Activated T-helper 2 cell treated with anti-CD3 and anti-CD28 coated beads, Interferon-gamma antibody, Interleukin-2, Interleukin-4, amounts not matched to agents 10 μg/mL and 5 μg/mL and 100 μg/mL, durations not matched to agents 14 hours and 24 hours and 36 hours (primary cell): ENCODE measurements at regions of chr4 and their contacts with region 1.

Region 1: DNA sequence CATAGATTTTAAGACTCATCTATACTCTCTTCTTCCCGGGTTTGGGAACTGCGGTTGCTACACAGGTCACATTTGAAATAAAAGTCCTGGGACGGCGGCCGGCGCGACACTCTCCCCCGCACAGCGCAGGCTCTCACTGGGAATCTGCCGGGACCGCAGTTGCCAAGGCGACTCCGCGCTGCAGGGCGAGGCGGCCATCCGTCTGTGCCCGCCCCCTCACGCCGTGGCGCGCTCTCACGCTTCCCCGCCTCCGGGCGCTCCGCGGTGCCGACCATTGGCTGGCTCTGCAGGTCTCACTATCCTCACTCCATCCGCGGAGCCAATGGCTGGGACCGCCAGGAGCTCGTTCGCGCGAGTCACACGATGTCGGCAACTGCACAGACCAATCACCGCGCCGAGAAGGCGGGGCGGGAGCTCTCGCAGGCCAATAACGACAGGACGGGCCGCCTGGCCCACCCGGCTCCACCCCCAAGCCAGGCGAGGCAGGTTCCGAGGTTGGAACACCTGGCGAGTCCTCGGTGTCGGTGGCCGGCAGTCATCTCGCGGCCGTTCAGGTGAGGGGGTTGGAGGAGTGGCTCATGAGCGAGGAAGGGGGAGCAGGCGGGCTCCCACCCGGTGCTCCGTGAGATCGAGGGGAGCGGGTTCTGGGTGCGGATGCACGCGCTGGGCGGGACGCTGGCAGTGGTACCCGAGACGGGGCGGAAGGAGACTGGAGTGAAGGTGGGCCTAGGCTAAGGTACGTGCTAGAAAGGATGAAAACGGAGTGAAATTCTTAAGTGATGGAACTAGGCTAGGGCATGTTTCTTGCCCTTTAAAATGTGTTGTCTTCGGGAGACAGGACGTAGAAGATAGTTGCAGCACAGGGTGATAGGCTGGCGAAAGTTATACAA is at the start of gene MSMO1:
- DNase-seq: peak; percentile 99
- H3K4me3 Mint-ChIP-seq: no peak within 1 kb of the TSS
- H3K27ac Mint-ChIP-seq: no peak within 1 kb of the TSS
- H3K4me1 Mint-ChIP-seq: peaks cover 41% of the 10 kb centered on the region
- H3K27me3 Mint-ChIP-seq: no peaks in the 10 kb centered on the region
- total RNA-seq, gene MSMO1: 105 and 110 TPM in 2 replicates

Region 2: GRCh38 chr4:165112368-165113139 is 214.9 kb before region 1 on chr4 and contains the start of gene TMEM192:
- intact Hi-C with region 1: loop called (anchors 1 kb)
- DNase-seq: peak; percentile 87
- H3K4me3 Mint-ChIP-seq: peak within 1 kb of the TSS; percentile 92
- H3K27ac Mint-ChIP-seq: peak within 1 kb of the TSS; percentile 85
- H3K4me1 Mint-ChIP-seq: peaks cover 9% of the 10 kb centered on the region
- H3K27me3 Mint-ChIP-seq: peaks cover 16% of the 10 kb centered on the region
- total RNA-seq, gene TMEM192: 13.4 and 14.4 TPM in 2 replicates

Region 3: DNA sequence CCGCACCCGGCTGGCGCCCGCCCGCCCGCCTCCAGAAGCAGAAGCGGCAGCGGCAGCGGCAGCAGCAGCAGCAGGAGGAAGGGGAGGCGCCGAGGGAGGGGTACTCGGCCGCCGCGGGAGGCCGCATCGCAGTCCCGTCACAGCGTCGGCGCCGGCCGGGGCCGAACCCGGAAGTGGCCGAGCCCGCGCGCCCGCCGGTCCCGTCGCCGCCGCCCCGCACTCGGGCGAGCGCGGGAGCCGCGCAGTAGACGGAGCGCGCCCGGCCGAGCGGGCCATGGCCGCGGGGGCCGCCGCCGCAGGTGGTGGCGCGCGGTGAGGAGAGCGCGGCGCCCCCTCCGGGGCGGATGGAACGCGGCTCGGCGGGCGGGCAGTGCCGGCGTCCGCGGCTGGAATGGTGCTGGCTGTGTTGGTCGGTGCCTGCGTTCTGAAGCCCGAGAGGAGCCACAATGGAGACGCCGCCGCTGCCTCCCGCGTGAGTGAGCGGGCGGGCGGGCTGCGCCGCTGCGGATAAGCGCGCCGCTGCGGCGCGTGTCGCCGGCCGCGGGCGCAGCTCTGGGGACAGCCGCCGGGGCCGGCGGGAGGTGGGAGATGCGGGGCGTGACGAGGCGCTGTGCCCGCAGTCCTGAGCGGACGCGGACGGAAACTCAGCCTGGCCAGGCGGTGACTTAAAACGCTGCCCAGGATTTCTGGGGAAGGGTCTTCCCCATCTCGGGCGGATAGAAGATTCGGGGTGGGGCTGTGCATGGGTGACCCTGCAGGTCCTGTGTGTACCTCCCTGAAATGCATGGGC is 119.8 kb before region 1 on chr4 and contains the start of gene KLHL2:
- intact Hi-C with region 1: loop called (anchors 1 kb)
- DNase-seq: peak; percentile 72
- H3K4me3 Mint-ChIP-seq: peak within 1 kb of the TSS; percentile 88
- H3K27ac Mint-ChIP-seq: peak within 1 kb of the TSS; percentile 80
- H3K4me1 Mint-ChIP-seq: peaks cover 68% of the 10 kb centered on the region
- H3K27me3 Mint-ChIP-seq: no peaks in the 10 kb centered on the region
- total RNA-seq, gene KLHL2: 30.3 and 32.3 TPM in 2 replicates

Region 4: GRCh38 chr4:165288639-165289422 is 38.6 kb before region 1 on chr4:
- intact Hi-C with region 1: loop called (anchors 5 kb)
- DNase-seq: no peak
- H3K4me3 Mint-ChIP-seq: no peak overlapping the region
- H3K27ac Mint-ChIP-seq: peak overlapping the region; percentile 49
- H3K4me1 Mint-ChIP-seq: peaks cover 40% of the 10 kb centered on the region
- H3K27me3 Mint-ChIP-seq: no peaks in the 10 kb centered on the region

Region 5: DNA sequence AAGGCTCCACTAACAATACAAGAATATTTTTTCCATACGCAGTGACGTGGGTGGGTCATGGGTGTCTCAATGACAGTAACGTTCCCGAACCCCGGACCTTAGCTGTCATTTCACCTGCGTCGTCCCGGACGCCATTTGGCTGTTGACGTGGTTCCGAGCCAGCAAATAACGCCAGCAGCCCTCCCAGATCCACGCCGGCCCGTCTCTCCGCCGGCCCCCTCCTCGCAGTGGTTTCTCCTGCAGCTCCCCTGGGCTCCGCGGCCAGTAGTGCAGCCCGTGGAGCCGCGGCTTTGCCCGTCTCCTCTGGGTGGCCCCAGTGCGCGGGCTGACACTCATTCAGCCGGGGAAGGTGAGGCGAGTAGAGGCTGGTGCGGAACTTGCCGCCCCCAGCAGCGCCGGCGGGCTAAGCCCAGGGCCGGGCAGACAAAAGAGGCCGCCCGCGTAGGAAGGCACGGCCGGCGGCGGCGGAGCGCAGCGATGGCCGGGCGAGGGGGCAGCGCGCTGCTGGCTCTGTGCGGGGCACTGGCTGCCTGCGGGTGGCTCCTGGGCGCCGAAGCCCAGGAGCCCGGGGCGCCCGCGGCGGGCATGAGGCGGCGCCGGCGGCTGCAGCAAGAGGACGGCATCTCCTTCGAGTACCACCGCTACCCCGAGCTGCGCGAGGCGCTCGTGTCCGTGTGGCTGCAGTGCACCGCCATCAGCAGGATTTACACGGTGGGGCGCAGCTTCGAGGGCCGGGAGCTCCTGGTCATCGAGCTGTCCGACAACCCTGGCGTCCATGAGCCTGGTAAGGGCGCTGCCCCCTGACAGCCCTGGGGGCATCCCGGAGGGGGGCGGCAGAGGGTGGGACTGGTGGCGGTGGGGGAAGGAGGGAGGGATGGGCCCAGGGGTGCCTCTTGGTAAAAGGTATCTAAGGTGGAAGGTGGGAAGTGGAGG is 51.6 kb after region 1 on chr4 and contains the start of gene CPE:
- intact Hi-C with region 1: loop called (anchors 5 kb)
- DNase-seq: peak; percentile 44
- H3K4me3 Mint-ChIP-seq: peak within 1 kb of the TSS; percentile 44
- H3K27ac Mint-ChIP-seq: no peak within 1 kb of the TSS
- H3K4me1 Mint-ChIP-seq: peaks cover 6% of the 10 kb centered on the region
- H3K27me3 Mint-ChIP-seq: peaks cover 71% of the 10 kb centered on the region
- total RNA-seq, gene CPE: 0.18 and 0.30 TPM in 2 replicates